Naive thymus-derived CD4-positive, alpha-beta T cell (primary cell): ENCODE measurements at regions of chr2 and their contacts with region 1.

Region 1: GRCh38 chr2:160156665-160157064 is 43.4 kb downstream of the ITGB6 start:
- DNase-seq: no peak
- ATAC-seq: no peak
- H3K4me3 ChIP-seq: no peak overlapping the region
- H3K4me3 Mint-ChIP-seq: no peak overlapping the region
- H3K27ac ChIP-seq: no peak overlapping the region
- H3K27ac Mint-ChIP-seq: no peak overlapping the region
- H3K4me1 ChIP-seq: no peaks in the 10 kb centered on the region
- H3K4me1 Mint-ChIP-seq: no peaks in the 10 kb centered on the region
- H3K27me3 ChIP-seq: no peaks in the 10 kb centered on the region
- H3K27me3 Mint-ChIP-seq: peaks cover 0 to 3% (median 0%) of the 10 kb centered on the region in 5 donors

Region 2: DNA sequence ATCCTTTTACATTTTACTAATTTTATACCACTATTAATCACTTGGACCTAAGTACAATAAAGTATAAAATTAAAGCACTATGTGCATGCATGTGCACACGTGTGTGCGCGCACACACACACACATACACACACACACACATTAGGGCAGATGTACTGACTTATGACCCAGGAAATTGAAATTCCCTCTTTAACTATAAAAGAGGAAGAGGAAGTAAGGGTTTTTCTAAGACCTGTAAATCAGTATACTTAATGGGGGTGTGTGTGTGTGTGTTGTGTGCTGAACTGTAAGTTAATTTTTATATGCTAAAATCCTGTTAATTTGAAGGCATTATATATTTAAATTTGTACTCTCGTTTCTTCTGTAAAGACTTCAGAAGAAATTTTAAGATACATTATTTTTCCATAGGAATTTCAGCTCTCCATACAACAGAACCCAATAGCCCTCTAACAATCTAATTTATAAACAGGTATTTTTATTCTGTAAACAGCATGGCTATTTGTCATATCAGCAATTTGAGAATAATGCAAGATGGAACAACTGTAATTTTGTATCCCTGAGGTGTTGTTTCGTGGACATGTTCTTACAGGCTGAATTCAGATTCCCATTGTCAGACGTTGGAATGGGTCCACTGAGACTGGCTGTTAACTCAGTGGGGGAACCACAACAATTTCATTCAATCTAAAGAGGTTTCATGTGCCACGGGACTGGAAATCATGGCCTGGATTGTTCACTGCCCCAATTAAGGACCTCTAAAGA is 185.1 kb before region 1 on chr2:
- CTCF ChIA-PET with region 1: no interaction called
- POLR2A ChIA-PET with region 1: no interaction called
- intact Hi-C with region 1: no loop called
- DNase-seq: no peak
- ATAC-seq: no peak
- H3K4me3 ChIP-seq: no peak overlapping the region
- H3K4me3 Mint-ChIP-seq: no peak overlapping the region
- H3K27ac ChIP-seq: no peak overlapping the region
- H3K27ac Mint-ChIP-seq: no peak overlapping the region
- H3K4me1 ChIP-seq: no peaks in the 10 kb centered on the region
- H3K4me1 Mint-ChIP-seq: no peaks in the 10 kb centered on the region
- H3K27me3 ChIP-seq: no peaks in the 10 kb centered on the region
- H3K27me3 Mint-ChIP-seq: peaks cover 0 to 8% (median 3%) of the 10 kb centered on the region in 5 donors

Region 3: GRCh38 chr2:160210599-160211138 is 54.0 kb after region 1 on chr2:
- CTCF ChIA-PET with region 1: no interaction called
- POLR2A ChIA-PET with region 1: no interaction called
- intact Hi-C with region 1: loop called in 1 of 2 experiments (anchors 1 kb)
- DNase-seq: peak; percentile 46 to 79 (median 71)
- ATAC-seq: peak; percentile 90
- H3K4me3 ChIP-seq: no peak overlapping the region
- H3K4me3 Mint-ChIP-seq: no peak overlapping the region
- H3K27ac ChIP-seq: no peak overlapping the region
- H3K27ac Mint-ChIP-seq: peak overlapping the region in 1 of 9 donors; percentile 19
- H3K4me1 ChIP-seq: no peaks in the 10 kb centered on the region
- H3K4me1 Mint-ChIP-seq: peaks cover 0 to 11% (median 8%) of the 10 kb centered on the region in 7 donors
- H3K27me3 ChIP-seq: no peaks in the 10 kb centered on the region
- H3K27me3 Mint-ChIP-seq: peaks cover 0 to 22% (median 5%) of the 10 kb centered on the region in 5 donors

Region 4: DNA sequence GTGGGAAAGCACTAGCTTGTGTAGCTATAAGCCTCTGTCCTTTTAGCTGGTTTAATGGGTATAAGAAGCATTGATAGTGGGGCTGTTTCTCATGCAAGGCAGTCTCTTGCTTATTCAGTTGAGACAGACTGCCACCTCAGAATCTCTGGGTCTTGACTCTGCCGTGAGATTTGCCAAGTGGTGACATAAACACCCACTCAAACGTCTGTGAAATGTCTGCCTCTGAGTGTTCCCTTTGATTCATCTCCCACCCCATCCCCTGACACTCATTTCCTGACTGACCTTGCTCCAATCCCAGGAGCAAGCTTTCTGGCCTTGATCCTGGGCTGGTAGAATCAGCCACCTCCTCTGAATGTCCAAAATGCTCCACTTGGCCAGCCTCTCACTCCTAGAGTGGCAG is 478.8 kb after region 1 on chr2:
- CTCF ChIA-PET with region 1: no interaction called
- POLR2A ChIA-PET with region 1: no interaction called
- intact Hi-C with region 1: no loop called
- DNase-seq: no peak
- ATAC-seq: no peak
- H3K4me3 ChIP-seq: no peak overlapping the region
- H3K4me3 Mint-ChIP-seq: no peak overlapping the region
- H3K27ac ChIP-seq: no peak overlapping the region
- H3K27ac Mint-ChIP-seq: no peak overlapping the region
- H3K4me1 ChIP-seq: no peaks in the 10 kb centered on the region
- H3K4me1 Mint-ChIP-seq: peaks cover 0 to 18% (median 11%) of the 10 kb centered on the region in 7 donors
- H3K27me3 ChIP-seq: peaks cover 0 to 2% of the 10 kb centered on the region in 2 donors
- H3K27me3 Mint-ChIP-seq: no peaks in the 10 kb centered on the region